ENCODE measurements at regions of chr2 and their contacts with region 1.

Region 1: GRCh38 chr2:18520451-18521425 is 39.7 kb downstream of the RDH14 start:
- DNase-seq: peak; percentile 50
- H3K4me3 ChIP-seq: no peak overlapping the region
- H3K27ac ChIP-seq: no peak overlapping the region
- H3K4me1 ChIP-seq: no peaks in the 10 kb centered on the region
- H3K27me3 ChIP-seq: no peaks in the 10 kb centered on the region
- CTCF ChIP-seq: peak; percentile 91 to 92

Region 2: DNA sequence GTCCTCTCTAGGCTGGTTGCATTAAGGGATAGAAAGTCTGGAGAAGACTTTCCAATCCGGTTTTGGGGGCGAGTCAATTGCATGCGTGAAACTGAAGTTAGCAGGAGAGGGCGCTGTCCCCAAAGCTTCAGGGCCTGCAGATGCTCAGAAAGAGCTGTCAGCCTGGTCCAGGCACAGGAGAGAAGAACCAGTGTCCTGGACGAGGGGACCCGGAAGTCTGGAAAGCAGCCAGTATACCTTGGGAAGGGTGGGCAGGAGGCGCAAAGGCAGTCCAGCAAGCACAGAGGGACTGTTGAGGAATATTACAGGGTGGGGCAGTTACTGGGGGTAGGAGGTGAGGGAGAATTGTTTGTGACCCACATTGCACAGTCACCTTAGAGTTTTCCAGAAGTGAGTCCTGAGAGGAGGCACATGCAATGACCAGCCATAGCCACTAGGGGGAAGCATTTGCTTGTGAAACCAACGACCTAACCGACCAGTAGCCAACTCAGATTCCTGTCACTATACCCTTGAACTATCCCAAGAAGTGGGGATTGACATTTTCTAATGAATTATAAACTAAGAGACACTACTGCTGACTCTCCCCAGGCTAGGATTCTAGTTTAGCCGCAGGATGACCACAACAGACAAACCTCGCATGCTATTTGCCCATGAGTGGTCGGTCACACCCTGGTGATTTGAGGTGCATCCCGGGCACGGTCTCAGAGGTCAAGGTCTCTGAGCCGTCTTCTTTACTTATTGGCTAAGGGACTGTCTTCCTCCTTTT is 133.1 kb before region 1 on chr2:
- CTCF ChIA-PET with region 1: no interaction called
- dilution Hi-C with region 1: no loop called
- in situ Hi-C with region 1: no loop called
- intact Hi-C with region 1: loop called (anchors 2 kb)
- DNase-seq: peak; percentile 51
- H3K4me3 ChIP-seq: no peak overlapping the region
- H3K27ac ChIP-seq: no peak overlapping the region
- H3K4me1 ChIP-seq: no peaks in the 10 kb centered on the region
- H3K27me3 ChIP-seq: no peaks in the 10 kb centered on the region
- CTCF ChIP-seq: peak; percentile 93 to 95

Region 3: DNA sequence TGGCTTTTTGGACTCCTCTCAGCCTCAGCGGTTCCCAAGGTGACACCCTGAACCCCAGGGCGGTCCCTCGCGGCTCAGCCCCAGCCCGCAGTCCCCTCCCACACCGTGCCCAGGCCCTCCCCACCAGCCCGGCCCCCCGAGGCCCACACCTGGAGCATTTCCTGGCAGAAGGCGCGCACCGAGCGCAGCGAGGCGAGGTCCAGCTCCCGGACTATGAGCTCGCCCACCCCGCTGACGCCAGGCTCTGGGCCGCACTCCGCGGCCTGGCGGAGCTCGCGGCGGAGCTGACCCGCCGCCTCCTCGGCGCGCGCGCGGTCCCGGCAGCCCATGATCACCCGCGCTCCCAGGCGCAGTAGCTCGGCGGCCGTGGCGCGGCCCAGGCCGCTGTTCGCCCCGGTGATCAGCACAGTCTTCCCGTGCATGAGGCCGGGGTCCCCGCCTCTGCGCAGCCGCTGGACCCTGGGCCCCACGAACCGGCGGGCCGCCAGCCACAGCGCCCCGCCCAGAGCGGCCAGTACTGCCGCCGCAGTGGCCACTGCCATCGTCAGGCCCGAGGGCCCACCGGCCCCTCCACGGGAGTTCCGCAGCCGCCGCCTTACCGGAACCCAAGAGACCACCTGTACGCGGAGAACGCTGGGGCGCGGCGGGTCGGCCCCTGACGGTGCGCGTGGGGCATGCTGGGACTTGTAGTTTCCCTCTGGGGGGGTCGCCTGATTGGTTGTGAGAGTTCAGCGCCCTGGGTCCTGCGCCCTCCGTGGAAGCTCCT is 39.5 kb after region 1 on chr2 and contains the start of gene RDH14:
- CTCF ChIA-PET with region 1: no interaction called
- dilution Hi-C with region 1: no loop called
- in situ Hi-C with region 1: no loop called
- intact Hi-C with region 1: loop called (anchors 1 kb)
- DNase-seq: peak; percentile 88
- H3K4me3 ChIP-seq: peak within 1 kb of the TSS; percentile 50 to 81 (median 62)
- H3K27ac ChIP-seq: peak within 1 kb of the TSS; percentile 74
- H3K4me1 ChIP-seq: peaks cover 10% of the 10 kb centered on the region
- H3K27me3 ChIP-seq: no peaks in the 10 kb centered on the region
- CTCF ChIP-seq: no peak
- total RNA-seq, gene RDH14: 19.5 to 20.0 TPM

Region 4: DNA sequence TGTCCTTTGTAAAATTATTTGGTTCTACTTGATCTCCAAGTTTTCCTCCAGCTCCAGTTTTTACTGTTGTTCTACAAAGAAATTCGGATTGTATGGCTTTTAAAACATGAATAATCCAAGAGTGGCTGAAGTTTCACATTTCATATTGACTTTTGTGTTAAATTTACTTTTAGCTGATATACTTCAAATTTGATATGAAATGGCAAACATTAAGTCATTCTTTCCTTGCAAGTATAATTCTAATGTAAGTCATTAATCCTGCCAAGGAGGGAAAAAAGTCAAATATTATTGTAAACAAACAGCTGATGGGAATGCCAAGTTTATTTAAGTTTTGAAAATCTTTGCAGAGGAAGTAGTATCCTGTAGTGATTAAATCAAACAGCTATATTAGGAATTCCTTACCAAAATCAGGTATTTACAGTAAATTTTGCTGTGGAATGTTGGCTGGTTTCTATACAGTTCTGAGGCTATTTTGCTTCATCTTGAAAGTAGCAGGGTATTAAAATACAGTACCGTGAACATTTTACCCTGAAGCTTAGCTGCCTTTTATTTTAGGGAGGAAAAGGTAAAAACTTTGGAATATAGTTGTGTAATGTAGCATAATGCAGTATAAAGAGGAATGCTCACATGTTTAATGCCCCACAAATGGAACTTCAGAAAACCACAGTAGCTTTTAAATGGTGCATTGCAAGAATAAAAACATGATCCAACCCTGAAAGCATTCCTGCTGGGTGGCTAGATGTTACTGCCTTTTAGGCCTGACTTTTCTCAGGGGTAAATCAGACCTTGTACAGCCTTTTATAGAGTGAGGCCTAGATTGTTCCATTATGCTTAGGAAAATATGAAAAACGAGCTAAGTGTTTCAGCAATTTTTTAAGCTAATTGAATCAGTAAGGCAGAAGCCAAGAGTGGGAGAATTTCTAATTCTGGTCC is 131.4 kb after region 1 on chr2:
- CTCF ChIA-PET with region 1: no interaction called
- dilution Hi-C with region 1: no loop called
- in situ Hi-C with region 1: no loop called
- intact Hi-C with region 1: no loop called
- DNase-seq: no peak
- H3K4me3 ChIP-seq: no peak overlapping the region
- H3K27ac ChIP-seq: no peak overlapping the region
- H3K4me1 ChIP-seq: no peaks in the 10 kb centered on the region
- H3K27me3 ChIP-seq: no peaks in the 10 kb centered on the region
- CTCF ChIP-seq: no peak

Region 5: GRCh38 chr2:18883616-18884456 is 363.1 kb after region 1 on chr2:
- CTCF ChIA-PET with region 1: no interaction called
- dilution Hi-C with region 1: no loop called
- in situ Hi-C with region 1: no loop called
- intact Hi-C with region 1: loop called (anchors 1 kb)
- DNase-seq: peak; percentile 32
- H3K4me3 ChIP-seq: no peak overlapping the region
- H3K27ac ChIP-seq: no peak overlapping the region
- H3K4me1 ChIP-seq: no peaks in the 10 kb centered on the region
- H3K27me3 ChIP-seq: no peaks in the 10 kb centered on the region
- CTCF ChIP-seq: peak; percentile 63 to 64

Region 6: GRCh38 chr2:19362755-19363473 is 842.2 kb after region 1 on chr2:
- CTCF ChIA-PET with region 1: interaction called, 4 read pairs
- dilution Hi-C with region 1: no loop called
- in situ Hi-C with region 1: loop called (anchors 10 kb)
- intact Hi-C with region 1: loop called (anchors 1 kb)
- DNase-seq: peak; percentile 83
- H3K4me3 ChIP-seq: peak overlapping the region; percentile 53 to 67 (median 65)
- H3K27ac ChIP-seq: peak overlapping the region; percentile 45
- H3K4me1 ChIP-seq: peaks cover 24% of the 10 kb centered on the region
- H3K27me3 ChIP-seq: no peaks in the 10 kb centered on the region
- CTCF ChIP-seq: peak; percentile 67 to 79

Measured in mammary epithelial cell (primary cell).